ENCODE measurements at regions of chr1 and their contacts with region 1.

Region 1: GRCh38 chr1:20361806-20362640 is 71.3 kb downstream of the VWA5B1 start:
- DNase-seq: no peak
- H3K4me3 ChIP-seq: no peak overlapping the region
- H3K27me3 ChIP-seq: peaks cover 34% of the 10 kb centered on the region
- CTCF ChIP-seq: peak; percentile 91

Region 2: GRCh38 chr1:20376880-20377494 is 15.0 kb after region 1 on chr1:
- CTCF ChIA-PET with region 1: interaction called, 80 read pairs
- POLR2A ChIA-PET with region 1: no interaction called
- DNase-seq: no peak
- H3K4me3 ChIP-seq: no peak overlapping the region
- H3K27me3 ChIP-seq: peaks cover 4% of the 10 kb centered on the region; the same call in 1 of the 2 replicates
- CTCF ChIP-seq: peak; percentile 90

Region 3: GRCh38 chr1:20386323-20387081 is 24.5 kb after region 1 on chr1:
- CTCF ChIA-PET with region 1: interaction called, 80 read pairs
- POLR2A ChIA-PET with region 1: no interaction called
- DNase-seq: no peak
- H3K4me3 ChIP-seq: no peak overlapping the region
- H3K27me3 ChIP-seq: peaks cover 31% of the 10 kb centered on the region
- CTCF ChIP-seq: no peak

Region 4: GRCh38 chr1:20485527-20486456 is 123.8 kb after region 1 on chr1 and contains the start of gene CAMK2N1:
- CTCF ChIA-PET with region 1: interaction called, 111 read pairs
- POLR2A ChIA-PET with region 1: no interaction called
- DNase-seq: no peak
- H3K4me3 ChIP-seq: peak within 1 kb of the TSS; percentile 90
- H3K27me3 ChIP-seq: peaks cover 5% of the 10 kb centered on the region
- CTCF ChIP-seq: no peak
- polyA plus RNA-seq, gene CAMK2N1: 23.5 and 40.2 TPM in 2 replicates